Naive thymus-derived CD8-positive, alpha-beta T cell (primary cell): ENCODE measurements at regions of chr7 and their contacts with region 1.

Region 1: DNA sequence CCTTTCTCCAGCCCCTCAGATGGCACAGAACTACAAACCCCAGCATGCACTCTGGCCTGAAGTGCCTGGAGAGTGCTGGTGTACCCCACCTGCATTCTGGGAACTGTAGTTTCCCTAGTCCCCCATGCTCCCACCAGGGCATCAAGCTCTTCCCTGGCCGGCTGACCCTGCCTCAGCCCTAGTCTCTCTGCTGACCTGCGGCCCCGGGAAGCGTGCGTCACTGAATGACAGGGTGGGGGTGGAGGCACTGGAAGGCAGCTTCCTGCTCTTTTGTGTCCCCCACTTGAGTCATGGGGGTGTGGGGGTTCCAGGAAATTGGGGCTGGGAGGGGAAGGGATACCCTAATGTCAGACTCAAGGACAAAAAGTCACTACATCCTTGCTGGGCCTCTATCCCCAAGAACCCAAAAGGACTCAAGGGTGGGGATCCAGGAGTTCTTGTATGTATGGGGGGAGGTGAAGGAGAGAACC is 2.1 kb downstream of the NOS3 start:
- DNase-seq: no peak
- ATAC-seq: peak in 1 of 2 donors; percentile 41
- H3K4me3 Mint-ChIP-seq: no peak overlapping the region
- H3K27ac Mint-ChIP-seq: peak overlapping the region in 5 of 10 donors; percentile 3 to 60 (median 46)
- H3K4me1 Mint-ChIP-seq: peaks cover 18 to 53% (median 40%) of the 10 kb centered on the region in 4 donors
- H3K27me3 Mint-ChIP-seq: peaks cover 0 to 11% (median 0%) of the 10 kb centered on the region in 5 donors

Region 2: GRCh38 chr7:151008511-151009323 is 15.8 kb after region 1 on chr7:
- POLR2A ChIA-PET with region 1: interaction called, 24 read pairs
- DNase-seq: peak; percentile 56 to 85 (median 70)
- ATAC-seq: peak; percentile 39 to 49
- H3K4me3 Mint-ChIP-seq: peak overlapping the region; percentile 72 to 89 (median 84)
- H3K27ac Mint-ChIP-seq: peak overlapping the region; percentile 84 to 97 (median 94)
- H3K4me1 Mint-ChIP-seq: peaks cover 26 to 66% (median 62%) of the 10 kb centered on the region in 4 donors
- H3K27me3 Mint-ChIP-seq: peaks cover 0 to 2% (median 0%) of the 10 kb centered on the region in 5 donors